ENCODE measurements at regions of chr3 and their contacts with region 1.

Region 1: DNA sequence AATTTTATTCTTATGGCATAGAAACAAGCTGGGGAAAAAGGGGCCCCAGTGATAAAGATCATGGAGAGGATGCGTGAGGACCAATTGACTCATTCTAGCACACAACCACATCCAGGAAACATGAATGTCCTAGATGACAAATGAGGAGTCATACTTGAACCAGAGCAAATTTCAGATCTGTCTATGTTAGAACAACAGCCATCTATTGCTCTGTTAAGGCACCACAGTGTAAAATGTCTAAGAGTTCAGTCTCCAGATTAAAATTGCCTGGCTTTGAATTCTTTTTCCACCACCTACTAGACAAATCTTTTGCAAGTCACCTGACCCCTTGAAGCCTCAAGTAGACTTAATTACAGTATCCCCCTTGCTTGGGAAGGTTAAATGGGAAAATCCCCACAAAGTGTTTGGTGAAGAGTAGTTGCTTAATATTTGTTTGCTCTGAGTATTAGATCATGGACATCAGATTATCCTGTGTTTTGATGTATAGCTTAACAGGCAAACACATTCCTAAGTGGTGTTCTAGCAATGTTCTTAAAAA is 258.7 kb upstream of the TGFBR2 start:
- DNase-seq: peak; percentile 72
- H3K4me3 Mint-ChIP-seq: peak overlapping the region; percentile 38
- H3K27ac Mint-ChIP-seq: peak overlapping the region; percentile 75
- H3K4me1 Mint-ChIP-seq: peaks cover 72% of the 10 kb centered on the region
- H3K27me3 Mint-ChIP-seq: peaks cover 14% of the 10 kb centered on the region

Region 2: GRCh38 chr3:30227571-30228301 is 120.0 kb before region 1 on chr3:
- CTCF ChIA-PET with region 1: no interaction called
- POLR2A ChIA-PET with region 1: no interaction called
- intact Hi-C with region 1: no loop called
- DNase-seq: no peak
- H3K4me3 Mint-ChIP-seq: no peak overlapping the region
- H3K27ac Mint-ChIP-seq: no peak overlapping the region
- H3K4me1 Mint-ChIP-seq: peaks cover 11% of the 10 kb centered on the region
- H3K27me3 Mint-ChIP-seq: no peaks in the 10 kb centered on the region

Region 3: DNA sequence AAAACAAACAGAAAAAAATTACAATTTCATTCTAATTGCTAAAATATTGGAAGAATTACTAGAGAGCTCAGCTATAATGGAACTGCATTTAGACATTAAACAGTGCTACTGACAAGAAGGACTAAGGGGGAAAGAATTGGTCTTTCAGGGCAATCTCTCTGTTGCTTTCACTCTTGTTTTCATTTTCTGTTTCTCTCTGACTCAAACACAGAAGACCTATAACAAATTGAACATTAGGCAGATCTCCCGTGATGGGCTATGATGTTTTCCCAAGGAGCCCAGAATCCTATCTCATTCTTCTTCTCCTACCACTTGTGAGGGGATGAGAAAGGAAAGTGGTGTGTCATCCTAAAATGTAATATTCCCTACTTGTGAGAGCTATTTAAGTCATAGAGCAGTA is 99.3 kb before region 1 on chr3:
- CTCF ChIA-PET with region 1: no interaction called
- POLR2A ChIA-PET with region 1: no interaction called
- intact Hi-C with region 1: loop called (anchors 1 kb)
- DNase-seq: no peak
- H3K4me3 Mint-ChIP-seq: no peak overlapping the region
- H3K27ac Mint-ChIP-seq: no peak overlapping the region
- H3K4me1 Mint-ChIP-seq: peaks cover 6% of the 10 kb centered on the region
- H3K27me3 Mint-ChIP-seq: peaks cover 3% of the 10 kb centered on the region

Region 4: GRCh38 chr3:30273304-30274072 is 74.3 kb before region 1 on chr3:
- CTCF ChIA-PET with region 1: no interaction called
- POLR2A ChIA-PET with region 1: no interaction called
- intact Hi-C with region 1: no loop called
- DNase-seq: no peak
- H3K4me3 Mint-ChIP-seq: no peak overlapping the region
- H3K27ac Mint-ChIP-seq: no peak overlapping the region
- H3K4me1 Mint-ChIP-seq: no peaks in the 10 kb centered on the region
- H3K27me3 Mint-ChIP-seq: no peaks in the 10 kb centered on the region

Region 5: DNA sequence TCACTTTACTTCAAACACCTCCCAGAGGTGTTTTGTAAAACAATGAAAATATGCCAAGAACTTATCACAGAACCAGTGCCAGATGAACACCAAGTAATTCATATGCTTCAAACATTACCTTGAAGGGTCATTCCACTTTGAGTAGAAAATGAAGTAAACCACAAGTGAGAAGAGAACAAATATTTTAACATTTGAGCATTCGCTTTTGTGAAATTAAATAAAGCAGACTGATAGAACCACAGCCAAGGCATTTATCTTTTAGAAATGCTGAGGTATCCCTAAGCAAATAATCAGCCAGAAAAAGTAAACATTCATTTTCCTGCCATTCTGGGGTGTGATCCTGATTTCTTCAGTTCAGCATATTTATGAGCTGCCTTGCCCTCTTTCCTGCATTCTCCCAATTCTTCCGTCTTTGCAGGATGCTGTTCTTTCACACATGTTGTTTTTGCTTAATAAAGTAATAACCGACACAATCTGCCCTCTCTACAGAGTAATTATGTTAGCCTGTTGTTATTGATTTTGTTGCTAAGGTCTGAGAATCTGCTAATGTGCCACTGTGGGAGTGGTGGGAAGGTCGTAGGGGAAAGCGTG is 23.0 kb after region 1 on chr3:
- CTCF ChIA-PET with region 1: no interaction called
- POLR2A ChIA-PET with region 1: no interaction called
- intact Hi-C with region 1: no loop called
- DNase-seq: no peak
- H3K4me3 Mint-ChIP-seq: no peak overlapping the region
- H3K27ac Mint-ChIP-seq: no peak overlapping the region
- H3K4me1 Mint-ChIP-seq: no peaks in the 10 kb centered on the region
- H3K27me3 Mint-ChIP-seq: peaks cover 2% of the 10 kb centered on the region

Region 6: DNA sequence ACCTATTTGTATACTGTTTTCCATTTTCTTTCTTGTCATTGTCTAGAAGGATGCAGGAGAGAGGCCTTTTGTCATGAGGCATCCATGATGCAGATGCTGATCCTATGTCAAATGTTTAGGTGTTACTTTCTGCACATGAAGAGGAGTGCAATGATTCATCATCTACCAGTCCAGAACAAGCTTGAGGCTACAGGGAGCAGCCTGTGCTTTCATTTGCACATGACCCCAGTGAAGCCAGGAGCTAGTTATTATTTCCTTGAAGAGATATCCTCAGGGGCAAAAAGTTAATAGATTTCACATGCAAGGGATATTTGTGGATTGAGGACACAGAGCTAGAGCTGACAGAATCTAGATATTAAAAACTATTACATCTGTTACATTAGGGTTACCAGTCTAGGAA is 54.2 kb after region 1 on chr3:
- CTCF ChIA-PET with region 1: no interaction called
- POLR2A ChIA-PET with region 1: no interaction called
- intact Hi-C with region 1: no loop called
- DNase-seq: no peak
- H3K4me3 Mint-ChIP-seq: no peak overlapping the region
- H3K27ac Mint-ChIP-seq: no peak overlapping the region
- H3K4me1 Mint-ChIP-seq: peaks cover 8% of the 10 kb centered on the region
- H3K27me3 Mint-ChIP-seq: peaks cover 2% of the 10 kb centered on the region

Region 7: DNA sequence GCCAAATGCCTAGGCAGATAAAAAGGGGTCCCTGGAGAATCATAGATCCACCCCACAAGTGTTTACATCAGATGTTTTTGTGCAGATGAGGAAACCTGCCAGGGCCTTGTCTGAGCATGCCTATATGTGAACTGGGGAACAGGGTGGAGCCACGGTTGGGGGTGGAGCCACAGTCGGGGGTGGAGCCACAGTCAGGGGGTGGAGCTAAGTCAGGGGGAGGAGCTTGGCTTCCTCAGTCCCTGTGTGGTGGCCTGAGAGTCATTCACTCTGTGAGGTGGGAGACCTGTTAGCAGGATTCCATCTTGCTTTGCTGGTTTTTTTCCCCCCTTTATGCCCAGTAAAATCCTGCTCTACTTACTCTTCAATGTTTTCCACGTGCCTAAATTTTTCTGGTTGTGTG is 200.9 kb after region 1 on chr3:
- CTCF ChIA-PET with region 1: no interaction called
- POLR2A ChIA-PET with region 1: no interaction called
- intact Hi-C with region 1: loop called (anchors 5 kb)
- DNase-seq: peak; percentile 57
- H3K4me3 Mint-ChIP-seq: no peak overlapping the region
- H3K27ac Mint-ChIP-seq: no peak overlapping the region
- H3K4me1 Mint-ChIP-seq: peaks cover 24% of the 10 kb centered on the region
- H3K27me3 Mint-ChIP-seq: no peaks in the 10 kb centered on the region

Region 8: DNA sequence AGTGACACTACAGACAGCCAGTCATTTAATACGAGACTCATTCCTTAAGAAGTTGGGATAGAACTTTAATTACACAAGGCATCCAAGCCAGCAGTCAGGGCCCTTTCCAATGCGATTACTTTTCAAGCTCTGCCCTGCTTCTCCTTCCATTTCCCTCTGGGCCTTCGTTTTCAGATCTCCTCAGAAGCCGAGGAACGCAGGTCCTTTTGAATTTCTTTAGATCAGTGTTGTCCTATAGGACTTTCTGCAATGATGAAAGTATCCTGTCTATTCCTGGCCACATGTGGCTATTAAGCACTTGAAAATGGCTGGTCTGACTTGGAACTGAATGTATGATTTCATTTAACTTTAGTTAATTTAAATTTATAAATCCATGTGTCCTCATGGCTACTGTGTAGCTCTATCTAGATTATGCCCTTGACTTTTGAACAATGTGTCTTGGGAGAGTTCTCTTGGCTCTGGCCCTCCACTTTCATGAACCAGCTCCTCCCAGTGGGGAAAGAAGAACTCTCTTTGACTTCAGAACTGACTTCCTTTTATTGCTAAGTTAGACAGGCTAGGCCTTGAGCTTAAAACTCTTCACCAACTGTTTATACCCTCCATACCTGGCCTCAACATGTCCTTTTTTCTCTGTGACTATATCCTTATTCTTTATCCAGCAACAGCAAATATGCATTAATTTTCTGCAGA is 281.3 kb after region 1 on chr3:
- CTCF ChIA-PET with region 1: no interaction called
- POLR2A ChIA-PET with region 1: no interaction called
- intact Hi-C with region 1: loop called (anchors 1 kb)
- DNase-seq: no peak
- H3K4me3 Mint-ChIP-seq: peak overlapping the region; percentile 45
- H3K27ac Mint-ChIP-seq: peak overlapping the region; percentile 91
- H3K4me1 Mint-ChIP-seq: peaks cover 90% of the 10 kb centered on the region
- H3K27me3 Mint-ChIP-seq: no peaks in the 10 kb centered on the region

Region 9: GRCh38 chr3:31077021-31077601 is 729.4 kb after region 1 on chr3:
- CTCF ChIA-PET with region 1: no interaction called
- POLR2A ChIA-PET with region 1: no interaction called
- intact Hi-C with region 1: loop called (anchors 10 kb)
- DNase-seq: peak; percentile 73
- H3K4me3 Mint-ChIP-seq: no peak overlapping the region
- H3K27ac Mint-ChIP-seq: peak overlapping the region; percentile 1
- H3K4me1 Mint-ChIP-seq: peaks cover 18% of the 10 kb centered on the region
- H3K27me3 Mint-ChIP-seq: no peaks in the 10 kb centered on the region